ENCODE measurements at regions of chr4 and their contacts with region 1.

Region 1: GRCh38 chr4:89294573-89295269 is 12.9 kb downstream of the GPRIN3 start:
- DNase-seq: no peak
- H3K4me3 Mint-ChIP-seq: peak overlapping the region; percentile 61
- H3K27ac Mint-ChIP-seq: peak overlapping the region; percentile 96
- H3K4me1 Mint-ChIP-seq: peaks cover 78% of the 10 kb centered on the region
- H3K27me3 Mint-ChIP-seq: no peaks in the 10 kb centered on the region

Region 2: GRCh38 chr4:88284439-88285234 is 1010.1 kb before region 1 on chr4 and contains the start of gene PPM1K:
- intact Hi-C with region 1: loop called (anchors 5 kb)
- DNase-seq: peak; percentile 99
- H3K4me3 Mint-ChIP-seq: peak within 1 kb of the TSS; percentile 99
- H3K27ac Mint-ChIP-seq: peak within 1 kb of the TSS; percentile 100
- H3K4me1 Mint-ChIP-seq: peaks cover 38% of the 10 kb centered on the region
- H3K27me3 Mint-ChIP-seq: no peaks in the 10 kb centered on the region
- total RNA-seq, gene PPM1K: 38.5 and 39.9 TPM in 2 replicates

Region 3: GRCh38 chr4:88523325-88524129 is 771.2 kb before region 1 on chr4 and contains the start of gene PYURF:
- intact Hi-C with region 1: loop called (anchors 10 kb)
- DNase-seq: peak; percentile 67
- H3K4me3 Mint-ChIP-seq: peak within 1 kb of the TSS; percentile 98
- H3K27ac Mint-ChIP-seq: peak within 1 kb of the TSS; percentile 96
- H3K4me1 Mint-ChIP-seq: peaks cover 49% of the 10 kb centered on the region
- H3K27me3 Mint-ChIP-seq: no peaks in the 10 kb centered on the region
- total RNA-seq, gene PYURF: 51.2 and 52.8 TPM in 2 replicates

Region 4: DNA sequence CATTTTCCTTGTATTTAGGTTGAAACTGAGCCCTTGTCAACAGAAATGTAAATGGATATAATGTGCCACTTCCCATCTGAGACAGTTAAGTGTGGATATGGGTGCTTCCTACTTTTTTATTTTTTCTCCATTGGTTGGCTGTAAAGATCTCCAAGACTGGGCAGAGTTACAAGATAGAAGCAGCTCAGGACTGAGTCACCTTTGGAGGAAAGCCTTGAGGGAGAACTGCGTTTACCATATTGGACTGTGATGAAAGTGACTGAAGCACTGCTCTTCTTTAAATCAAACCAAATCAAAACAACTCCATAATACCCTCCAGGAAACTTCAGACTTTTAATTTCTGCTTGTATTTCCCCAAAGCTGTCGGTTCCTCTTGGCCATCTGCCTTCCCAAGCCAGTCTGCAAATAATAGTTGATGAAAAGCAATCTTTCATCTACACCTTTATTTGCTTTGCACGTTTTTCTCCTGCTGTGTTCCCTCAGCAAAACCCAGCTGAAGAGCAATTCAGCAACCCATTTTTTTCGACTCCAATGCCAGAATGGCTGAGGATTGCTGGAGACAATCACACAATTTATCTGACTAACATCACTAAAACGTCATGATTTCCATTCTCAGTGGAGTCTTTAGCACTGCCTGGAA is 81.5 kb before region 1 on chr4:
- intact Hi-C with region 1: no loop called
- DNase-seq: no peak
- H3K4me3 Mint-ChIP-seq: no peak overlapping the region
- H3K27ac Mint-ChIP-seq: no peak overlapping the region
- H3K4me1 Mint-ChIP-seq: no peaks in the 10 kb centered on the region
- H3K27me3 Mint-ChIP-seq: peaks cover 10% of the 10 kb centered on the region

Region 5: DNA sequence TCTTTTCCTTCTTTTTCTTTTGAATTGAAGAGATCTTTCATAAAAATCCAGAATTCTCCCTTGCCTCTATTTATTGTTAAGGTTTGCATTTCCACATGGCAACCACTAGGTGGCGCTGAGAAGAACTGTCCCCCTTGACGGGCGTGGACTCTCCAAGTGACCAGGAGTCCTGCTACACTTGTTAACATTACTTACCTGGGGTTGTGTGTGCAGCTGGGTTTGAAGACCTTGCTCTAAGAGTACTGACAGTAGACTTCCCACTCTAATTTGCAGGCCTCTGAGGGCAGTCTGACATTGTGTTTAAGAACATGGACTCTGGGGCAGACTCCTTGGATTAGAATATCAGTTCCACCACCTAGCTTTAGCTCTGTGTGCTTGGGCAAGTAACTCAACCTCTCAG is 39.9 kb before region 1 on chr4:
- intact Hi-C with region 1: loop called (anchors 2 kb)
- DNase-seq: peak; percentile 16
- H3K4me3 Mint-ChIP-seq: no peak overlapping the region
- H3K27ac Mint-ChIP-seq: peak overlapping the region; percentile 39
- H3K4me1 Mint-ChIP-seq: peaks cover 54% of the 10 kb centered on the region
- H3K27me3 Mint-ChIP-seq: no peaks in the 10 kb centered on the region

Region 6: DNA sequence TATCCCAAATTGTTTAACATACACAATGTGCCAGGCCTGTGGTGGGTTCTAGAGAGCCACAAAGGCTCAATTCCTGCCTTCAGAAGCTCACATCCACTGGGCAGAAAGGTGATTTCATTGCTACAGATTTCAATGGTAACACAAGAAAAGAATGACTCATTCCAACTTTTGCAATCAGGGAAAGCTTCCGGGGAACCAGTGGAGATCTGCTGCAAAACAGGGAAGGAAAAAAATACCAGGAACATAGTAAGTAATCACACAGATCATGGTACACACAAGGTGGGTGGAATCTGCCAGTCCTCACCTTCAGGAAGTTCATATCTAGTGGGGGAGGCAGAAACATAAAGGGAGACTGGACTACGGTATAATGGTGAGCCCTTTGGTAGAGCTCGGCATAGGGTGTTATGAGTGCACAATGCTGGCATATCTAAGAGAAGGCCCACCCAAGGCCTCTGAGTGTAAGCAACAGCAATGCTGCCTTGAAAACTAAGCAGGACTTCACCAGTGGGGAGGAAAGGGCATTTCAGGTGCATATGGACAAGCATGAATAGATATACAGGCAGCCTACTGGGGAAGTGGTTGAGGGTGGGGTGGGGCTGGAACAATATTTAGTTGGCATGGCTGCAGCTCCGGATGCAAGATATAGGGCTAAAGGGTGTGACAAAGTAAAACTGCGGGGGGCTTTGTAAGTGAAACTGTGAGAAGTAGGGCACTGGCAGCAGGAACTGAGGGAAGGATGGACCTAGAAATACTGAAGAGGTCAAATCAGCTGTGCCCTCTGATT is 11.3 kb before region 1 on chr4:
- intact Hi-C with region 1: loop called (anchors 1 kb)
- DNase-seq: no peak
- H3K4me3 Mint-ChIP-seq: no peak overlapping the region
- H3K27ac Mint-ChIP-seq: peak overlapping the region; percentile 83
- H3K4me1 Mint-ChIP-seq: peaks cover 57% of the 10 kb centered on the region
- H3K27me3 Mint-ChIP-seq: no peaks in the 10 kb centered on the region

Region 7: DNA sequence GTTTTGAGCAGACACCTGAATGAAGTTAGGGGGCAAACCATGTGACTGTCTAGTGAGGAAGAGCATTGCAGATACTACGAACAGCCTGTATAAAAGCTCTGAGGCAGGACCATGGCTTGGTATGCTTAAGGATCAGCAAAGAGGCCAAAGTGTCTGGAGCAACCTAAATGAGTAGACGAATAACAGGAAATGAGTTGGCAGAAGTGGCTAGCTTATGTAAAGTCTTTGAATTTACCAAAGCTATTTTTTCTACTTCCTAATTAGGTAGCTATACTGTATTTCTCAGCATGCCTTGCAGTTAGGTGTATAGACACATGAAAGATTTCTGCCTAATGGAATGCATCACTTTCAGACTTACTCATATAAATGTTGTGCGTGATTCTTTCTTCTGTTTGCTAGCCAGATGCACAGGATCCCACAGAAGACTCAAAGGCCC is 22.2 kb after region 1 on chr4:
- intact Hi-C with region 1: loop called (anchors 2 kb)
- DNase-seq: no peak
- H3K4me3 Mint-ChIP-seq: peak overlapping the region; percentile 37
- H3K27ac Mint-ChIP-seq: peak overlapping the region; percentile 76
- H3K4me1 Mint-ChIP-seq: peaks cover 33% of the 10 kb centered on the region
- H3K27me3 Mint-ChIP-seq: no peaks in the 10 kb centered on the region

Region 8: GRCh38 chr4:89469930-89470375 is 175.2 kb after region 1 on chr4:
- intact Hi-C with region 1: loop called (anchors 2 kb)
- DNase-seq: peak; percentile 19
- H3K4me3 Mint-ChIP-seq: no peak overlapping the region
- H3K27ac Mint-ChIP-seq: peak overlapping the region; percentile 80
- H3K4me1 Mint-ChIP-seq: peaks cover 21% of the 10 kb centered on the region
- H3K27me3 Mint-ChIP-seq: no peaks in the 10 kb centered on the region

Region 9: GRCh38 chr4:89957046-89957926 is 662.6 kb after region 1 on chr4:
- intact Hi-C with region 1: no loop called
- DNase-seq: no peak
- H3K4me3 Mint-ChIP-seq: no peak overlapping the region
- H3K27ac Mint-ChIP-seq: no peak overlapping the region
- H3K4me1 Mint-ChIP-seq: no peaks in the 10 kb centered on the region
- H3K27me3 Mint-ChIP-seq: peaks cover 5% of the 10 kb centered on the region

Measured in activated T-helper 2 cell treated with anti-CD3 and anti-CD28 coated beads, Interferon-gamma antibody, Interleukin-2, Interleukin-4, amounts not matched to agents 10 μg/mL and 5 μg/mL and 100 μg/mL, durations not matched to agents 14 hours and 24 hours and 36 hours (primary cell).